ENCODE measurements at regions of chr7 and their contacts with region 1.

Region 1: DNA sequence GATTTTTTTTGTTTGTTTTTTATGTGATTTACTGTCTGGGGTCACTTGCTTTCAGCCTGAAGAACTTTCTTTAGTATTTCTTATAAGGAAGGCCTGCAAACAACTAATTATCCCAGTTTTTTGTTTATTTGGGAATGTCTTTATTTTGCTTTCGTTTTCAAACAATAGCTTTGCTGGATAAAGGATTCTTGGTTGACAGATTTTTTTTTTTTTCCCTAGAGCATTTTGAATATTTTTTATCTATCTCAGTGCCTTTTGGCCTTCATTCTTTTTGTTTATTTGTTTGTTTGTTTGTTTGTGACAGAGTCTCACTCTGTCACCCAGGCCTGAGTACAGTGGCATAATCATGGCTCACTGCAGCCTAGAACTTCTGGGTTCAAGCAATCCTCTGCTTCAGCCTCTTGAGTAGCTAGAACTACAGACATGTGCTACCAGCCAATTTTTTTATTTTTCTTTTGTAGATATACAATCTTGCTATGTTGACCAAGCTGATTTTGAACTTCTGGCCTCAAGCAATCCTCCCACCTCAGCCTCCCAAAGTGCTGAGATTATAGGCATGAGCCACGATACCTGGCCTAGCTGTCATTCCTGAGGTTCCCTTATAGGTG is 46.3 kb upstream of the FZD9 start:
- DNase-seq: no peak
- ATAC-seq: no peak
- H3K4me3 ChIP-seq: no peak overlapping the region
- H3K27ac ChIP-seq: no peak overlapping the region
- H3K4me1 ChIP-seq: no peaks in the 10 kb centered on the region
- H3K27me3 ChIP-seq: peaks cover 4% of the 10 kb centered on the region; the same call in 1 of the 2 replicates
- CTCF ChIP-seq: no peak
- POLR2A ChIP-seq: no peak
- RAD21 ChIP-seq: no peak

Region 2: DNA sequence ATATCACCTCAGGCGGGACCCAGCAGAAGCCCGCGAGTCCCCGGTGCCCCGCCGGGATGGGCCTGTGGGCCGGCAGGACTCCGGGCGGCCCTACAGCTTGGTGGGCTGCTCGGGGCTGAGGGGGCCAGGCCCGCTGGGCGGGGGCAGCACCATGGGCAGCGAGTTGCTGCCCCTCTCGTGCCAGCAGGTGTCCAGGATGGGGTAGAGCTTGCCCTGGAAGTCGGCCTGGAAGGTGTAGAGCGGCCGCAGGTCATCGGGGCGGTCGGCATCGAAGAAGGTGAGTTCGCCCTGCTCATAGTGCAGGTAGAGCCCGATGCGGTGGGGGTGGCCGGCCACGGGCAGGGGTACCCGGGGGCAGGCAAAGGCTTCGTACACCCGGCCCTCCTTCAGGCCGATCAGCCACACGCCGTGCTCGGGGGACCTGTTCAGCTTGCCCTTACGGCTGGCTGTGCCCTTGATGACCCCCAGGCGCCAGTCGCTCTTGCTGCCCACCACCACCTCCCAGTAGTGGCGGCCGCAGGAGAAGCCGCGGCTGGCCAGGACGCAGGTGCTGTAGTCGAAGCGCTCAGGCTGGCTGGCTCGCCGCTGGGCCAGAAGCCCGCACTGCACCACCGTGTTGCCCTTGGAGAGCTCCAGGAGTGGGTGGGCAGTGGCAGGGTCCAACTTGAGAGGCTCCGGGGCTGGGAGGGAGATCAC is 74.3 kb before region 1 on chr7:
- CTCF ChIA-PET with region 1: no interaction called
- POLR2A ChIA-PET with region 1: no interaction called
- dilution Hi-C with region 1: no loop called
- in situ Hi-C with region 1: no loop called
- intact Hi-C with region 1: no loop called
- DNase-seq: no peak
- ATAC-seq: no peak
- H3K4me3 ChIP-seq: no peak overlapping the region
- H3K27ac ChIP-seq: no peak overlapping the region
- H3K4me1 ChIP-seq: peaks cover under 1% of the 10 kb centered on the region; the same call in 1 of the 2 replicates
- H3K27me3 ChIP-seq: peaks cover 2% of the 10 kb centered on the region
- CTCF ChIP-seq: no peak
- POLR2A ChIP-seq: no peak
- RAD21 ChIP-seq: no peak

Region 3: DNA sequence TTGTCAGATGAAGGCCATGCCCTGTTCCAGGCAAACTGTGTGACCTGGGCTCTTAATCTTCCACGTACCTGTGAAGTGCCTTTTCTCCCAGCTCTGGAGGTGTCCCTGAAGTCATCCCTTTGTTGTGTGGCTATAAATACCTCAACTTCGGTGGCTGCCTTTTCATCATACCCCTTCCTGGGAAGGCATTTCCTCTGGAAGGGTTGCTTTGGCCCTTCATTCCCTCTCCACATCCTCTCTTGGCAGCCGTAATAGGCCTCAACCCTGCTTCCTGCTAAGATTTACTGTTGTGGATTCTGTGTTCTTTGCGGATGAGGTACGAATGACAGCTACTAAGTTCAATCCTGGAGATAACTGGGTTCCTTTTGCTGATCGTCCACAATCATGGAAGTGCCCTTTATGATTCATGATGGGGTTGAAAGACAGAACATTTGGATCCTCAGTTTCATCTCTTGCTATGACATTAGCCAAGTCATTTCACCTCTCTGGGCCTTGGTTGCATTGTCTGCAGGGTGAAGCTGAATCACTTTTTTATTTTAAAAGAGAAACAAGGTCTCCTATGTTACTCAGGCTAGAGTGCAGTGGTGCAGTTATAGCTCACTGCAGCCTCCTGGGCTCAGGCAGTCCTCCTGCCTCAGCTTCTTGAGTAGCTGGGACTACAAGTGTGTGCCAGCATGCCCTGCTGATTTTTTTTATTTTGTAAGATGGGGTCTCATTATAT is 35.7 kb before region 1 on chr7:
- CTCF ChIA-PET with region 1: no interaction called
- POLR2A ChIA-PET with region 1: no interaction called
- dilution Hi-C with region 1: no loop called
- in situ Hi-C with region 1: no loop called
- intact Hi-C with region 1: loop called (anchors 5 kb)
- DNase-seq: no peak
- ATAC-seq: no peak
- H3K4me3 ChIP-seq: no peak overlapping the region
- H3K27ac ChIP-seq: no peak overlapping the region
- H3K4me1 ChIP-seq: no peaks in the 10 kb centered on the region; the same call in 1 of the 2 replicates
- H3K27me3 ChIP-seq: peaks cover 9% of the 10 kb centered on the region
- CTCF ChIP-seq: no peak
- POLR2A ChIP-seq: no peak
- RAD21 ChIP-seq: no peak

Measured in IMR-90 (cell line).